ENCODE measurements at regions of chr2 and their contacts with region 1.

Region 1: DNA sequence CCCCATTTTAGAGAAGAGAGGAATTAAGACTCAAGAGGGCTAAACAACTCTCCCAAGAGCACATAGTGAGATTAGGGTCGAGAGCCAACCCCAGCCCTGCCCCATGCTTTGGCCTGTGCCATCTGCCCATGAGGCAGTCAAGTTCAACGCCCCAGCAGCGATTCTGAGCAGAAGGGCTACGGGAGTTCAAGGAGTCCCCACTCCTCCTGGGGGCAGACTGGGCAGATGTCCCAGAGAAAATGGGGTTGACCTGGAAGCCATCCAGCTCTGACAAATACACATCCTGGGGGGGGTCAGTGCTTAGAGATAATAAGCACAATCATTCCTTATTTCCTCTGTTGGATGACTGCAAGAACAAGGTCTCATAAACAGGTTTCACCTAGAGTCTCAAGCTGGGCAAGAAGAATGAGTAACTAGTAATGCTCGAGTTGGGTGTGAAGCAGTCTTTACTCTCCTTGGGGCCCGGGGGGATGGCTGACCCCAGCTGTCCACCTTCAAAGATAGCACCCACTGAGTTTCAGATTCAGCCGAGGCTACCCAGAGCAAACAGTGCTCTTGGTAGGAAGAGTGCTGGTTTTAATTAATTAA is 716.4 kb downstream of the RNF144A start:
- DNase-seq: no peak
- H3K4me3 ChIP-seq: no peak overlapping the region
- H3K27ac ChIP-seq: no peak overlapping the region
- H3K4me1 ChIP-seq: no peaks in the 10 kb centered on the region
- H3K27me3 ChIP-seq: no peaks in the 10 kb centered on the region
- CTCF ChIP-seq: no peak
- POLR2A ChIP-seq: no peak

Region 2: DNA sequence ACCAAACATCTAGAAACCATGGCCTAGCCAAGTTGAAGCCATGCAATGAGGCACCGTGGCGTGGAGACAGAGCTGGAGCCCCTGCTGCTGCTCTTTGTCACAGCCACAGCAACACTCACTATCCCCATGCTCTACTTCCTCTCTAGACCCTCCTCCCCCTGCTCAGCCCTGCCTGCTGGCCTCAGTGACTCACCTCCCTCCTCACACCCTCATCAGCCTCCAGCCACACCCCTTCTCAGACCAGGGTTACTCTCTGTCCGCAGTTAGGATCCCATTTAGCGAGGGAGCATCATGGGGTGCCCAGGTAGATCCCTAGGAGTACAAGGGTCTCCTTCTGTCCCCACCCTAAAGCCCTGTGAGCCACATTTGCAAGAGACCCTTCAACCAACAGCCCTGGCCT is 1966.9 kb before region 1 on chr2:
- intact Hi-C with region 1: no loop called
- DNase-seq: no peak
- H3K4me3 ChIP-seq: no peak overlapping the region
- H3K27ac ChIP-seq: no peak overlapping the region
- H3K4me1 ChIP-seq: no peaks in the 10 kb centered on the region
- H3K27me3 ChIP-seq: no peaks in the 10 kb centered on the region
- CTCF ChIP-seq: no peak
- POLR2A ChIP-seq: no peak

Region 3: GRCh38 chr2:7405861-7406715 is 227.6 kb before region 1 on chr2:
- intact Hi-C with region 1: no loop called
- DNase-seq: no peak
- H3K4me3 ChIP-seq: no peak overlapping the region
- H3K27ac ChIP-seq: no peak overlapping the region
- H3K4me1 ChIP-seq: no peaks in the 10 kb centered on the region
- H3K27me3 ChIP-seq: no peaks in the 10 kb centered on the region
- CTCF ChIP-seq: no peak
- POLR2A ChIP-seq: no peak

Region 4: GRCh38 chr2:7593360-7593759 is 40.3 kb before region 1 on chr2:
- intact Hi-C with region 1: loop called (anchors 2 kb)
- DNase-seq: no peak
- H3K4me3 ChIP-seq: no peak overlapping the region
- H3K27ac ChIP-seq: no peak overlapping the region
- H3K4me1 ChIP-seq: no peaks in the 10 kb centered on the region
- H3K27me3 ChIP-seq: no peaks in the 10 kb centered on the region
- CTCF ChIP-seq: no peak
- POLR2A ChIP-seq: no peak

Region 5: DNA sequence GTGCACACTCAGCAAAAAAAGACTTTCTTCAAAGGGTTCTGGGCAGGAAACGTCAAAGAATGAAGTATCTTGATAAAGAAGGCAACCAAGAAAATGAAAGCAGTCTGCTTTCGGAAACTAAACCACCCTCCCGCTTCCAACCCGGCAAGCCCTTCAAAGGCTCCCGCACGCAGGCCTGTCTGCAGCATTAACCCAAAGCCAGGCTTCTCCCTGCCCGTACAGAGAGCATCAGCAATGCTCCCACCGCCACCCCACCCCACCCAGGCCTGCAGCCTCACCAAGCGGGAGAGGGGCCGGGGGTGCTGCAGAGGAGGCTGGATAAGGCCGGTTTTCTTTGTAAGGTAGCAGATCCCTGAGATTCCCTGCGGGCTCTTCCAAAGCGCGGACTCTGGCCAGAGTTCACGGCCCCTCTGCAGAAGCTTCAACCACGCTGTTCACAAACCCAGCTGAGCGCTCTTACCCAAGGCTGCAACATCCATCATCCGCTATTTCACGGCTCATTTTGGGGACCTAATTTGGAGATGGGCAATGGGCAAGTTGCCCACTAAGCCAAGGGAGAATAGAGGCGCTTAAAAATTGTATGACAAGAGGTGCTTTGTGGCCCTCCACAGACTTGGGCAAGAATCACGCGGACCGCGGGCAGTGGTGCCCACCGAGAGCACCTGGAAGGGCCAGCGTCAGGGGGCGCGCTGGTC is 822.6 kb after region 1 on chr2:
- intact Hi-C with region 1: no loop called
- DNase-seq: no peak
- H3K4me3 ChIP-seq: peak overlapping the region in 1 of 3 donors; percentile 30
- H3K27ac ChIP-seq: no peak overlapping the region
- H3K4me1 ChIP-seq: no peaks in the 10 kb centered on the region
- H3K27me3 ChIP-seq: peaks cover 0 to 5% of the 10 kb centered on the region in 2 donors
- CTCF ChIP-seq: no peak
- POLR2A ChIP-seq: no peak

Measured in breast epithelium (tissue), 4 donors.